ENCODE measurements at regions of chr6 and their contacts with region 1.

Region 1: GRCh38 chr6:93419304-93420162 is at the start of gene EPHA7:
- DNase-seq: peak; percentile 93
- H3K4me3 ChIP-seq: peak within 1 kb of the TSS; percentile 37 to 69 (median 57)
- H3K27ac ChIP-seq: no peak within 1 kb of the TSS
- H3K4me1 ChIP-seq: peaks cover 35% of the 10 kb centered on the region
- H3K27me3 ChIP-seq: peaks cover 27 to 73% of the 10 kb centered on the region in 2 experiments
- CTCF ChIP-seq: no peak
- POLR2A ChIP-seq: no peak
- total RNA-seq, gene EPHA7: 0.09 TPM in 1 of 2 replicates, not detected in the other

Region 2: GRCh38 chr6:92122746-92123145 is 1296.8 kb before region 1 on chr6:
- CTCF ChIA-PET with region 1: interaction called, 7 read pairs
- POLR2A ChIA-PET with region 1: no interaction called
- dilution Hi-C with region 1: no loop called
- intact Hi-C with region 1: loop called (anchors 10 kb)
- DNase-seq: peak; percentile 44
- H3K4me3 ChIP-seq: no peak overlapping the region
- H3K27ac ChIP-seq: no peak overlapping the region
- H3K4me1 ChIP-seq: no peaks in the 10 kb centered on the region
- H3K27me3 ChIP-seq: no peaks in the 10 kb centered on the region
- CTCF ChIP-seq: peak in 1 of 2 donors; percentile 31
- POLR2A ChIP-seq: no peak

Region 3: GRCh38 chr6:93017213-93017612 is 402.3 kb before region 1 on chr6:
- CTCF ChIA-PET with region 1: interaction called, 12 read pairs
- POLR2A ChIA-PET with region 1: no interaction called
- dilution Hi-C with region 1: no loop called
- intact Hi-C with region 1: no loop called
- DNase-seq: no peak
- H3K4me3 ChIP-seq: no peak overlapping the region
- H3K27ac ChIP-seq: no peak overlapping the region
- H3K4me1 ChIP-seq: no peaks in the 10 kb centered on the region
- H3K27me3 ChIP-seq: no peaks in the 10 kb centered on the region
- CTCF ChIP-seq: no peak
- POLR2A ChIP-seq: no peak

Region 4: DNA sequence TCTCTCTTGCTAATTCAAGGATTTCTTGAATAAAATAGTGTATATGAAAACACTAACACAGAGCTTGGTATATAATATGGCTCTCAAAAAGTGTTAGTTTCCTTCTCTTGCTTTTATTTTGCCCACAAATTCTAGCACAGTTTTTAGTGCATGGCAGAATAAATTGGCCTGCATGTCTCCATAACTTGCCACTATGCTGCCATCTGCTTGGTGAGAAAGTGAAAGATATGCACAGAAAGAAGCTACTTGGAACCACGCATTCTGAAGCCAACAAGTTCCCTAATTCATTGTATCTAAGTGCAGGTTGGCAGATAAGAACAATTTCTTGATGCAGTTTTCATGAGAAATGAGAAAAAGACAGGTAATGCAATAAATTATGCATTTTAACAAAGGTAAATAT is 101.4 kb before region 1 on chr6:
- CTCF ChIA-PET with region 1: no interaction called
- POLR2A ChIA-PET with region 1: no interaction called
- dilution Hi-C with region 1: no loop called
- intact Hi-C with region 1: no loop called
- DNase-seq: no peak
- H3K4me3 ChIP-seq: no peak overlapping the region
- H3K27ac ChIP-seq: no peak overlapping the region
- H3K4me1 ChIP-seq: no peaks in the 10 kb centered on the region
- H3K27me3 ChIP-seq: no peaks in the 10 kb centered on the region
- CTCF ChIP-seq: no peak
- POLR2A ChIP-seq: no peak

Region 5: DNA sequence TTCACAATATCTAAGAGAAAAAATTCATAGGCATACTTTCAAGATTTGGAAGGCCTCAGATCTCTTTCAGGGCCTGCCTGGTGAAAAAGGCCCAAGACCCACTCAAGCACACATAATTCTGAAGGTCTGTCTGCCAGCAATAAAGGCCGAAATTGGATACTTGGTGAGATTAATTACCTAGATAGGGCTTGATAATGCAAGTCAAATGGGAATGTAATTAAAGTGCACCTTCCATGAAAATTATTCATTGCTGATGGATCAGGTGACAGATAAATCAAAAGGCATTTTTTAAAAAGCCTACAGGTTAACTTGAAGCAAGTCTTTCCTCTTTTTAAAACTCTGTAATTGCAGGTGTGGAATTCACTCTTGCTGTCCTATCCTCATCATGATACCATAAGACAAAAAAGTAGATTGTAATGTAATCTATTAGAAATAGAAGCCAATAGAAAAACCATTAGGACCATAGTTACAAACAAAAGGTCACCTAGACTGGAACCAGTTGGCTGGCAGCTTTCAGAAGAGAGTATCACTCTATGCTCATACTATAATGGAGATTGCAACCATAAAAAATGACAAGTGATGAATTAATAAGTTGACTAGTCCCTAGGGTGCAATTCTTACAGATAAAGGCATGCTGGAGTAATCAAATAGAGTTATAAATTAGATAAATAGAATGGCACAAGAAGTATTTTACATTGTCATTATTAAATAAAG is 77.5 kb before region 1 on chr6:
- CTCF ChIA-PET with region 1: no interaction called
- POLR2A ChIA-PET with region 1: no interaction called
- dilution Hi-C with region 1: no loop called
- intact Hi-C with region 1: loop called (anchors 5 kb)
- DNase-seq: no peak
- H3K4me3 ChIP-seq: no peak overlapping the region
- H3K27ac ChIP-seq: no peak overlapping the region
- H3K4me1 ChIP-seq: no peaks in the 10 kb centered on the region
- H3K27me3 ChIP-seq: no peaks in the 10 kb centered on the region
- CTCF ChIP-seq: no peak
- POLR2A ChIP-seq: no peak

Region 6: DNA sequence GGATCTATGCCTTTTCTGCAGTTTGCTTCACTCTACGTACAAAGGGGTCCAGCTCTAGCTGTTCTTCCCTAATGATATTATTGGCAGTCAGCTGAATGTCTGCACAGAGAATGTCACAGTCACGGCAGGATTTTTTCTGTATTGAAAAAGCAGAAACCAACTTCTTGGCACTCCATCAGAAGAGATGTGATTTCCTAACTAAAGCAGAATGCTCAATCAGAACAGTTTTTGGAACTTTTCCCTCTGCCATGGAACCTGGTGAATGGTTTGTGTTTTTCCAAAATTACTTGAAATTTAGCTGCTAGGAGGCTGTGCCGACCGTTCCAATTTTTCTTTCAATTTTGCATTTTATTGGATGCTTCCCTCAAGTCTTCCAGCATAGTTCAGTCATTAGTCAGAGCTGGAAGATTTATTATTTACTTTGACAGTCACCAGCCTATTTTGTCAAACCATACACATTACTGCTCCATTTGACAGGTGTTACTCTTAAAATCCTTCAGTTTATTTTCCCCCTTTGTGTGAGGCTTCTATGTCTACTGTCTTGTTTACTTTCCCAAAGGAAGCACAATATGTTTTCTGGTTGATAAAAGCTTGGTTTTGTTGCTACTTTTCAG is 259.4 kb after region 1 on chr6:
- CTCF ChIA-PET with region 1: no interaction called
- POLR2A ChIA-PET with region 1: no interaction called
- dilution Hi-C with region 1: no loop called
- intact Hi-C with region 1: loop called (anchors 1 kb)
- DNase-seq: peak; percentile 11
- H3K4me3 ChIP-seq: no peak overlapping the region
- H3K27ac ChIP-seq: no peak overlapping the region
- H3K4me1 ChIP-seq: peaks cover 28% of the 10 kb centered on the region
- H3K27me3 ChIP-seq: no peaks in the 10 kb centered on the region
- CTCF ChIP-seq: no peak
- POLR2A ChIP-seq: no peak

Region 7: GRCh38 chr6:95091823-95092436 is 1672.4 kb after region 1 on chr6:
- CTCF ChIA-PET with region 1: interaction called, 47 read pairs
- POLR2A ChIA-PET with region 1: no interaction called
- dilution Hi-C with region 1: no loop called
- intact Hi-C with region 1: loop called (anchors 1 kb)
- DNase-seq: peak; percentile 39
- H3K4me3 ChIP-seq: no peak overlapping the region
- H3K27ac ChIP-seq: no peak overlapping the region
- H3K4me1 ChIP-seq: peaks cover 11% of the 10 kb centered on the region
- H3K27me3 ChIP-seq: no peaks in the 10 kb centered on the region
- CTCF ChIP-seq: peak; percentile 23 to 39
- POLR2A ChIP-seq: no peak